ENCODE measurements at regions of chr1 and their contacts with region 1.

Region 1: DNA sequence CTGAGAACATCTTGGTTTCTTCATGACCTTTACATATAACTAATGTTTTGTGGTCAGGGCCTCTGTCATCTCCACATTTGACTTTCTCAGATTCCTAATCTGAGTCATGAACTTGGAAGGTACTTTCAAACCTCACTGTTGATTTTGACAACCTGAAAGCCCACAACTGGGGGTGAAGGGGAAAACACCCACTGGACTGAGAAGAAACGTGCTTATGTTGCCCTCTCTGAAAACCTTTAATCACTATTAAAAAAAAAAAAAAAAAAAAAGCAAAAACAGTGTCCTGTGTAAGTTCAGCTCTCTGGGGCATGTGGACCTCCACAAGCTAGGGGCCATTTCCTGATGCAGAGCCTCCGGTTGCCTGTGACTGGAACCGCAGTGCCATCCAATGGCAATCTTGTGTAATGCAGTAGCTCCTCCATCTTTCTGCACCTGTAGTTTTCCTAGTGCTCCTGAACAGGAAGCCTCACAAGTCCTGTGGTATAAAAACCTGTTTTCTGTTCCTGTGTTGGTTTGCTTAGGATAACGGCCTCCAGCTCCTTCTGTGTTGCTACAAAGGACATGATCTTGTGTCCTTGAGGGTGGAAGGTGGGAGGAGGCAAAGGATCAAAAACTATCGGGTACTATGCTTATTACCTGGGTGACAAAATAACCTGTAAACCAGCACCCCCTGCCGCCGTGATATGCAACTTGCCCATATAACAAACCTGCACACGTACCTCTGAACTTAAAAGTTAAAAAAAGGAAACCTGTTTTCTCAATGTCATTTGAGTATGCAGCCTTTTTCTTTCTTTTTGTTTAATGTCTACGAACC is 124.5 kb downstream of the ZNF648 start:
- DNase-seq: peak; percentile 87
- H3K4me3 Mint-ChIP-seq: no peak overlapping the region
- H3K27ac Mint-ChIP-seq: no peak overlapping the region
- H3K4me1 Mint-ChIP-seq: no peaks in the 10 kb centered on the region
- H3K27me3 Mint-ChIP-seq: no peaks in the 10 kb centered on the region
- CTCF ChIP-seq: peak; percentile 75

Region 2: DNA sequence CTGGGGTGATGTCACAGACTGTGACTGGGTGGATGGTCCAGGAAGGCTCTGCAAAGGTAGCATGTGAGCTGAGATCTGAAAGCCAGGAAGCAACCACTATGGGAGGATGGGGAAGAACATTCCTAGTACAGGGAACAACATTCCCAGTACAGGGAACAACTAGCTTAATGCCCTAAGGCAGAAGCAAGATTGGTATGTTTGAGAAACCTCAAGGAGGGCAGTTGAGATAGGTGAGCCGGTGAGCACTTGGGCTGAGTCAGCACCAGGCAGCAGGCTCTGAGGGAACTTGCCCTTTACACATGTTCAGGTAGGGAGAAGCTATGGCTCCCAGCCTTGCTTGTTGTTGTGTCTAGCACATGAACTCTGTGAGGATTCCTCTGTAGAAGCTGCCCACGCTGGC is 477.9 kb before region 1 on chr1:
- CTCF ChIA-PET with region 1: interaction called, 17 read pairs
- POLR2A ChIA-PET with region 1: no interaction called
- intact Hi-C with region 1: no loop called
- DNase-seq: peak; percentile 41
- H3K4me3 Mint-ChIP-seq: no peak overlapping the region
- H3K27ac Mint-ChIP-seq: no peak overlapping the region
- H3K4me1 Mint-ChIP-seq: no peaks in the 10 kb centered on the region
- H3K27me3 Mint-ChIP-seq: no peaks in the 10 kb centered on the region
- CTCF ChIP-seq: no peak

Region 3: GRCh38 chr1:181497870-181498269 is 439.1 kb before region 1 on chr1:
- CTCF ChIA-PET with region 1: interaction called, 22 read pairs
- POLR2A ChIA-PET with region 1: no interaction called
- intact Hi-C with region 1: no loop called
- DNase-seq: no peak
- H3K4me3 Mint-ChIP-seq: no peak overlapping the region
- H3K27ac Mint-ChIP-seq: no peak overlapping the region
- H3K4me1 Mint-ChIP-seq: peaks cover 6% of the 10 kb centered on the region
- H3K27me3 Mint-ChIP-seq: peaks cover 62% of the 10 kb centered on the region
- CTCF ChIP-seq: no peak

Region 4: GRCh38 chr1:181743878-181744312 is 193.1 kb before region 1 on chr1:
- CTCF ChIA-PET with region 1: interaction called, 25 read pairs
- POLR2A ChIA-PET with region 1: interaction called, 3 read pairs
- intact Hi-C with region 1: no loop called
- DNase-seq: peak; percentile 88
- H3K4me3 Mint-ChIP-seq: no peak overlapping the region
- H3K27ac Mint-ChIP-seq: no peak overlapping the region
- H3K4me1 Mint-ChIP-seq: peaks cover 12% of the 10 kb centered on the region
- H3K27me3 Mint-ChIP-seq: no peaks in the 10 kb centered on the region
- CTCF ChIP-seq: no peak

Region 5: GRCh38 chr1:181846681-181847080 is 90.3 kb before region 1 on chr1:
- CTCF ChIA-PET with region 1: no interaction called
- POLR2A ChIA-PET with region 1: no interaction called
- intact Hi-C with region 1: no loop called
- DNase-seq: no peak
- H3K4me3 Mint-ChIP-seq: no peak overlapping the region
- H3K27ac Mint-ChIP-seq: no peak overlapping the region
- H3K4me1 Mint-ChIP-seq: no peaks in the 10 kb centered on the region
- H3K27me3 Mint-ChIP-seq: peaks cover 29% of the 10 kb centered on the region
- CTCF ChIP-seq: no peak

Region 6: GRCh38 chr1:181918880-181919525 is 18.0 kb before region 1 on chr1:
- CTCF ChIA-PET with region 1: interaction called, 11 read pairs
- POLR2A ChIA-PET with region 1: interaction called, 3 read pairs
- intact Hi-C with region 1: no loop called
- DNase-seq: no peak
- H3K4me3 Mint-ChIP-seq: no peak overlapping the region
- H3K27ac Mint-ChIP-seq: no peak overlapping the region
- H3K4me1 Mint-ChIP-seq: no peaks in the 10 kb centered on the region
- H3K27me3 Mint-ChIP-seq: peaks cover 18% of the 10 kb centered on the region
- CTCF ChIP-seq: no peak

Region 7: DNA sequence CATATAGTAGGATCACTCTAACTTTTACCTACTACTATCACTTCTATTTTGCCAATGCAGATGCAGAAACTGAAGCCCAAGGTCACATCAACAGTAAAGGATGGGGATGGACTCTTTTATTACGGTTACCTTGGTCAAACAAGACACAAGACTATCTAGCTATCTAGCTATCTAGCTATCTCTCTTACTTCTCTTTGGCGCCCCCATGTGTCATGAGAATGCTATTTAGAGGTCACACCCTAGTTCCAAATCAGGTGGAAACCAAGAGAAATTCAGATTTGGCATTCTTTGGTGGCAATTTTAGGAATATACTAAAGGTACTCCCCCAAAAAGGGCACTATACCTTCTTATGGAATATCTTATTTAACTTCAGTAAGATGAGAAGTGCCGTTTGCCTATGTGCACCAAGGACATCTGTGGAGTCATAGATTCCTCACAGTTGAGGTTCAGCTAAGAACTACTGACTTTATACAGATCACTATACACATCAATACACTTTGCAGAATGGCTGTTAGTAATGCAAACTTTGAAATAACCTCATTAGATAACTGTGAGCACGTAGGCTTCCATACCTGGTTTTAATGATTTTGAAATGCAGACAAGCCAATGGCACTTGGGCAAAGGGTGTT is 117.8 kb after region 1 on chr1:
- CTCF ChIA-PET with region 1: interaction called, 5 read pairs
- POLR2A ChIA-PET with region 1: no interaction called
- intact Hi-C with region 1: loop called (anchors 1 kb)
- DNase-seq: peak; percentile 87
- H3K4me3 Mint-ChIP-seq: no peak overlapping the region
- H3K27ac Mint-ChIP-seq: no peak overlapping the region
- H3K4me1 Mint-ChIP-seq: peaks cover 6% of the 10 kb centered on the region
- H3K27me3 Mint-ChIP-seq: no peaks in the 10 kb centered on the region
- CTCF ChIP-seq: peak; percentile 73

Region 8: DNA sequence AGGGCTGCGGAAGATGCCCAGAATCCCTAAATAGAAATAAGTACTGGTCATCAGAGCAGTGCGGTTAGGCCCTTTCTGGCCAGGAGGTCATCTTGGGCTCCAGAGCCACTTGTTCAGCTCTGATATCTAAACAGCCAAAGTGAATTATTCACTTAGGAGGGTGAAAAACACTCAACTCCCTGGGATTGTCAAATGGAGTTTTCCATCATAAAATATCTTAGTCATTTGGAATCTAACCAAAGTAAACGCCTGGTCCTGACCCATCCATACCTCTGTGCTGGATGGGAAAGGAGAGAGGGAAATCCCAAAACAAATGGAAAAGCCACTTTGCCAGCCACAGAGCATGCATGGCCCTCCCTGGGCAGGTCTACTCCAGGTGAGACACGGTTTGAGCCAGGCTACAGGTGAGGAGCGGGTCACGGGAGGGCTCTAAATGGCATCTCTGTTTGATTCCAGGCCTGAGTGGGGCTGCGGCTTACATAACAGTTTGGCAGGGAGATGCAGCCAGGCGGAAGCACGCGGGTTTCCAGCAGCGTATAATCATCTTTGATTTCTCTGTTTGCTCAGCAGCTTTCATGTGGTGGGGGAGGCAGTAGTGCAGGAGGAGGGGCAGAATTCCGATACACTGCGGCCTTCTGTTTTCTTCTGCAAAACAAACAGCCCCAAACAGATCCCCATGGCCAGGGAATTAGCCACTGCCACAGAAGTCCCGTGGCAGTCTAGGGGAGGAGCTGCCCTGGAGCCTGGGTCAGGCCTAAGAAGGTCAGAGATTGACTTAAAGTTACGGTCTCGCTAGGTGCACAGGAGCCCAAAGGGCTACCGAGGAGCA is 183.7 kb after region 1 on chr1:
- CTCF ChIA-PET with region 1: no interaction called
- POLR2A ChIA-PET with region 1: no interaction called
- intact Hi-C with region 1: no loop called
- DNase-seq: peak; percentile 75
- H3K4me3 Mint-ChIP-seq: no peak overlapping the region
- H3K27ac Mint-ChIP-seq: no peak overlapping the region
- H3K4me1 Mint-ChIP-seq: peaks cover 13% of the 10 kb centered on the region
- H3K27me3 Mint-ChIP-seq: no peaks in the 10 kb centered on the region
- CTCF ChIP-seq: no peak

Measured in MCF 10A (cell line).